ENCODE measurements at regions of chr7 and their contacts with region 1.

Region 1: GRCh38 chr7:102404005-102404861 is 8.1 kb downstream of the PRKRIP1 start:
- DNase-seq: peak in 29 of 35 experiments; percentile 6 to 77 (median 34)
- ATAC-seq: peak; percentile 97 to 99 (median 98)
- H3K4me3 ChIP-seq: no peak overlapping the region
- H3K4me3 Mint-ChIP-seq: no peak overlapping the region
- H3K27ac ChIP-seq: no peak overlapping the region
- H3K27ac Mint-ChIP-seq: peak overlapping the region in 1 of 2 donors; percentile 48
- H3K4me1 ChIP-seq: peaks cover 0 to 7% of the 10 kb centered on the region in 2 experiments
- H3K4me1 Mint-ChIP-seq: peaks cover 5 to 17% (median 8%) of the 10 kb centered on the region in 3 donors
- H3K27me3 ChIP-seq: no peaks in the 10 kb centered on the region
- H3K27me3 Mint-ChIP-seq: no peaks in the 10 kb centered on the region

Region 2: DNA sequence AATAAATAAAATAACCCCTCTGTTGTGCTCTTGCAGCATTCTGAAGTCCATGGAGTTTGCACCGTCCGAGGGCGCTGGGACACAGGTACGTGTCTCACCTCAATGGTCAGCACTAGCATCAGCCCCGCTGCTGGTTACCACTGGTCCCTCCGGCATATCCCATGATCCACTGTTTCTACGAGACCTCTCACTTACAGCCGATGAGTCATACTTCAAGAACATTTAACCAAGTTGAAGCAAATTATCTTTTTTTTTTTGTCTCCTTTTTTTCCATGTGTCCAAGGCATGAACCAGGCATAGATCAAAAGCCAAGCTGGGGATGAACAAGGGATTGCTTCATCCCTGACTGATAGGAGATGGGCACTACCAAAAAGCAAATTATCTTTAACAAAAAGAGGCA is 210.4 kb before region 1 on chr7:
- CTCF ChIA-PET with region 1: no interaction called
- POLR2A ChIA-PET with region 1: no interaction called
- DNase-seq: no peak
- ATAC-seq: no peak
- H3K4me3 ChIP-seq: no peak overlapping the region
- H3K4me3 Mint-ChIP-seq: no peak overlapping the region
- H3K27ac ChIP-seq: no peak overlapping the region
- H3K27ac Mint-ChIP-seq: no peak overlapping the region
- H3K4me1 ChIP-seq: no peaks in the 10 kb centered on the region
- H3K4me1 Mint-ChIP-seq: no peaks in the 10 kb centered on the region
- H3K27me3 ChIP-seq: no peaks in the 10 kb centered on the region
- H3K27me3 Mint-ChIP-seq: no peaks in the 10 kb centered on the region

Region 3: GRCh38 chr7:102450242-102450641 is 46.0 kb after region 1 on chr7:
- CTCF ChIA-PET with region 1: interaction called, 9 to 13 read pairs
- POLR2A ChIA-PET with region 1: no interaction called
- DNase-seq: peak in 34 of 35 experiments; percentile 20 to 71 (median 48)
- ATAC-seq: peak; percentile 86 to 98 (median 89)
- H3K4me3 ChIP-seq: no peak overlapping the region
- H3K4me3 Mint-ChIP-seq: no peak overlapping the region
- H3K27ac ChIP-seq: no peak overlapping the region
- H3K27ac Mint-ChIP-seq: no peak overlapping the region
- H3K4me1 ChIP-seq: peaks cover 0 to 3% of the 10 kb centered on the region in 2 experiments
- H3K4me1 Mint-ChIP-seq: peaks cover 0 to 4% (median 3%) of the 10 kb centered on the region in 3 donors
- H3K27me3 ChIP-seq: no peaks in the 10 kb centered on the region
- H3K27me3 Mint-ChIP-seq: no peaks in the 10 kb centered on the region

Measured in T-cell (primary cell).